ENCODE measurements at regions of chr10 and their contacts with region 1.

Region 1: GRCh38 chr10:90857635-90858460 is at the start of gene HTR7:
- DNase-seq: peak; percentile 79
- H3K4me3 ChIP-seq: peak within 1 kb of the TSS; percentile 80
- H3K27ac ChIP-seq: peak within 1 kb of the TSS; percentile 48
- H3K4me1 ChIP-seq: peaks cover 21% of the 10 kb centered on the region
- H3K27me3 ChIP-seq: 0 out of 2 replicates have a peak, but pooled peaks cover 2% of the 10 kb centered on the region
- total RNA-seq, gene HTR7: 0.89 and 1.2 TPM in 2 replicates

Region 2: GRCh38 chr10:89793649-89794254 is 1064.1 kb before region 1 on chr10:
- in situ Hi-C with region 1: loop called (anchors 10 kb)
- DNase-seq: peak; percentile 74
- H3K4me3 ChIP-seq: no peak overlapping the region
- H3K27ac ChIP-seq: no peak overlapping the region
- H3K4me1 ChIP-seq: no peaks in the 10 kb centered on the region
- H3K27me3 ChIP-seq: no peaks in the 10 kb centered on the region

Region 3: GRCh38 chr10:90741926-90742565 is 115.8 kb before region 1 on chr10:
- in situ Hi-C with region 1: loop called (anchors 10 kb)
- DNase-seq: peak; percentile 73
- H3K4me3 ChIP-seq: no peak overlapping the region
- H3K27ac ChIP-seq: peak overlapping the region; percentile 27; the same call in 1 of the 2 replicates
- H3K4me1 ChIP-seq: peaks cover 12% of the 10 kb centered on the region
- H3K27me3 ChIP-seq: no peaks in the 10 kb centered on the region

Region 4: GRCh38 chr10:91652364-91652763 is 794.5 kb after region 1 on chr10:
- in situ Hi-C with region 1: no loop called
- DNase-seq: peak; percentile 97
- H3K4me3 ChIP-seq: peak overlapping the region; percentile 16; the same call in 1 of the 2 replicates
- H3K27ac ChIP-seq: peak overlapping the region; percentile 79
- H3K4me1 ChIP-seq: peaks cover 28% of the 10 kb centered on the region
- H3K27me3 ChIP-seq: no peaks in the 10 kb centered on the region

Measured in GM23248 (cell line).